GM12878 (cell line): ENCODE measurements at regions of chr1 and their contacts with region 1.

Region 1: DNA sequence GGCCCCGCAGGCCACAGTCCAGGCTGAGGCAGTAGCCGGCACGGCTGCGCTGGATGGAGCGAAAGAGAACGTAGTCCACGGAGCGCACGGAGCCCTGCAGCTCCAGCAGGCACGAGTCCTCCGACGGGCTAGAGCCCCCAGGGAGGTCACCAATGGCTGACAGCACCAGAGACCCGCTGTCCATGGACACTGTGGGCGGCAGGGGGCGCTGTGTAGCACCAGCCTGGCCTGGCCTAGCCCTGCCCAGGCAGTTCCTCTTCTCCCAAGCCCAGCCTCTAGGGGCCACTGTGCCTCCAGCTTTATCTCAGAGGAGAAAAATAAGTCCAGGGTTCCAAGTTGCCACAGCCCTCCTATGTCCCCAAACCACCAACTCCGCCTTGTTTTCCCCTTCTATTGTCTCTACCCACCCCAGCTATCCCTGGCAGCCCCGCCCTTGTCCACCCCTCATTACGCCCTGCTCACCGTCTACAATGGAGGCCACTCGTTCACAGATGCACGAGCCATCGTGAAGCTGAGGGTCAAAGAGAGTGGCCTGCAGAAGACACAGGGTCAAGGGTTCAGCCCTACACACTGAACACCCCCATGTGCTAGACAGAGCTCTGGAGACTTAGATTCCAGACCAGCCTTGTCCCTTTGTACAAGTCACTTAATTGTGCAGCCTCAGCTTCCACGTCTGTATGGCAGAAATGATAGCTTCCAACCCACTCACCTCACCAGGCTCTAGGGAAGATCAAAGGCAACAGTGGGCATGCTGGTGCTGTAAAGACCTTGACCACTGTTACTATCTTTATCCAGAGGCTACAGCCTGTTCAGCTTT is 4.4 kb downstream of the ENTREP3 start:
- DNase-seq: peak; percentile 57
- ATAC-seq: peak; percentile 97
- H3K4me3 ChIP-seq: peak overlapping the region; percentile 72
- H3K27ac ChIP-seq: peak overlapping the region; percentile 38
- H3K4me1 ChIP-seq: peaks cover 13% of the 10 kb centered on the region
- H3K27me3 ChIP-seq: no peaks in the 10 kb centered on the region
- CTCF ChIP-seq: peak; percentile 100; a peak in 5 of 6 replicates
- EP300 ChIP-seq: no peak
- POLR2A ChIP-seq: peak; percentile 65
- RAD21 ChIP-seq: peak; percentile 89

Region 2: GRCh38 chr1:154453574-154454352 is 797.1 kb before region 1 on chr1:
- CTCF ChIA-PET with region 1: no interaction called
- POLR2A ChIA-PET with region 1: no interaction called
- RAD21 ChIA-PET with region 1: no interaction called
- SMC1A ChIA-PET with region 1: no interaction called
- in situ Hi-C with region 1: no loop called
- intact Hi-C with region 1: no loop called
- DNase-seq: no peak
- ATAC-seq: no peak; the same call in 1 of the 3 replicates
- H3K4me3 ChIP-seq: no peak overlapping the region
- H3K27ac ChIP-seq: no peak overlapping the region
- H3K4me1 ChIP-seq: peaks cover 11% of the 10 kb centered on the region; the same call in 1 of the 2 replicates
- H3K27me3 ChIP-seq: no peaks in the 10 kb centered on the region
- CTCF ChIP-seq: no peak
- EP300 ChIP-seq: no peak
- POLR2A ChIP-seq: no peak
- RAD21 ChIP-seq: no peak

Region 3: DNA sequence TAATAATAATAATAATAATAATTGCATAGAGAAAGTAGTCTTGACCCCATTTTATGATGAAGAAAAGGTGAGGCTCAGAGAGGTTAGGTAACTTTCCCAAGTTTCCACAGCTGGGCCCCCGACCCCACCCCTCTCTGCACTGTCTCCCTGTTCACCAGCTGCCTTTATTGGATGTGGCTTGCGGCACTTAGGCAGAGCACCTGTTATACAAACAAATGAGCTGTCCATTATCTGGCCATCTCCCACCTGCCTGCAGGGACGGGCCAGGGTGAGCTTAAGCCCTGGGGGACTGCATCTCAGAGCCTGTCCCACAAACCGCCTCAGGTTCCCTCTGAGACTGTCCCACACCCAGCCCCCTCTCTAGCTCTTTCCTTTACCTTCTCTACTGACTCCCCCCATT is 133.2 kb before region 1 on chr1:
- CTCF ChIA-PET with region 1: no interaction called
- POLR2A ChIA-PET with region 1: no interaction called
- RAD21 ChIA-PET with region 1: no interaction called
- SMC1A ChIA-PET with region 1: no interaction called
- in situ Hi-C with region 1: no loop called
- intact Hi-C with region 1: no loop called
- DNase-seq: no peak
- ATAC-seq: no peak
- H3K4me3 ChIP-seq: no peak overlapping the region
- H3K27ac ChIP-seq: no peak overlapping the region
- H3K4me1 ChIP-seq: peaks cover 5% of the 10 kb centered on the region; the same call in 1 of the 2 replicates
- H3K27me3 ChIP-seq: peaks cover 0 to 2% of the 10 kb centered on the region in 2 experiments; a peak in 1 of 4 replicates
- CTCF ChIP-seq: no peak
- EP300 ChIP-seq: no peak
- POLR2A ChIP-seq: no peak
- RAD21 ChIP-seq: no peak

Region 4: GRCh38 chr1:155172732-155173477 is 77.9 kb before region 1 on chr1 and contains the start of gene KRTCAP2:
- CTCF ChIA-PET with region 1: interaction called, 13 read pairs
- POLR2A ChIA-PET with region 1: interaction called, 5 read pairs
- RAD21 ChIA-PET with region 1: interaction called, 3 read pairs
- SMC1A ChIA-PET with region 1: no interaction called
- in situ Hi-C with region 1: no loop called
- intact Hi-C with region 1: no loop called
- DNase-seq: peak; percentile 89
- ATAC-seq: peak; percentile 89
- H3K4me3 ChIP-seq: peak within 1 kb of the TSS; percentile 73
- H3K27ac ChIP-seq: peak within 1 kb of the TSS; percentile 93
- H3K4me1 ChIP-seq: peaks cover 26% of the 10 kb centered on the region
- H3K27me3 ChIP-seq: no peaks in the 10 kb centered on the region
- CTCF ChIP-seq: peak; percentile 96 to 99 (median 99); a peak in 5 of 6 replicates
- EP300 ChIP-seq: no peak
- POLR2A ChIP-seq: peak; percentile 86
- RAD21 ChIP-seq: peak; percentile 26; the same call in 1 of the 2 replicates
- polyA plus RNA-seq, gene KRTCAP2: 144 to 181 TPM

Region 5: GRCh38 chr1:155227261-155228095 is 23.4 kb before region 1 on chr1:
- CTCF ChIA-PET with region 1: interaction called, 24 read pairs
- POLR2A ChIA-PET with region 1: interaction called, 6 read pairs
- RAD21 ChIA-PET with region 1: interaction called, 3 read pairs
- SMC1A ChIA-PET with region 1: interaction called, 5 read pairs
- in situ Hi-C with region 1: no loop called
- intact Hi-C with region 1: no loop called
- DNase-seq: peak; percentile 96
- ATAC-seq: peak; percentile 95
- H3K4me3 ChIP-seq: peak overlapping the region; percentile 67
- H3K27ac ChIP-seq: peak overlapping the region; percentile 96
- H3K4me1 ChIP-seq: peaks cover 36% of the 10 kb centered on the region
- H3K27me3 ChIP-seq: no peaks in the 10 kb centered on the region
- CTCF ChIP-seq: no peak
- EP300 ChIP-seq: 0 out of 4 replicates have a peak, but pooled peaks of 1 of the 2 experiments have one; percentile 16
- POLR2A ChIP-seq: peak; percentile 79
- RAD21 ChIP-seq: no peak

Region 6: DNA sequence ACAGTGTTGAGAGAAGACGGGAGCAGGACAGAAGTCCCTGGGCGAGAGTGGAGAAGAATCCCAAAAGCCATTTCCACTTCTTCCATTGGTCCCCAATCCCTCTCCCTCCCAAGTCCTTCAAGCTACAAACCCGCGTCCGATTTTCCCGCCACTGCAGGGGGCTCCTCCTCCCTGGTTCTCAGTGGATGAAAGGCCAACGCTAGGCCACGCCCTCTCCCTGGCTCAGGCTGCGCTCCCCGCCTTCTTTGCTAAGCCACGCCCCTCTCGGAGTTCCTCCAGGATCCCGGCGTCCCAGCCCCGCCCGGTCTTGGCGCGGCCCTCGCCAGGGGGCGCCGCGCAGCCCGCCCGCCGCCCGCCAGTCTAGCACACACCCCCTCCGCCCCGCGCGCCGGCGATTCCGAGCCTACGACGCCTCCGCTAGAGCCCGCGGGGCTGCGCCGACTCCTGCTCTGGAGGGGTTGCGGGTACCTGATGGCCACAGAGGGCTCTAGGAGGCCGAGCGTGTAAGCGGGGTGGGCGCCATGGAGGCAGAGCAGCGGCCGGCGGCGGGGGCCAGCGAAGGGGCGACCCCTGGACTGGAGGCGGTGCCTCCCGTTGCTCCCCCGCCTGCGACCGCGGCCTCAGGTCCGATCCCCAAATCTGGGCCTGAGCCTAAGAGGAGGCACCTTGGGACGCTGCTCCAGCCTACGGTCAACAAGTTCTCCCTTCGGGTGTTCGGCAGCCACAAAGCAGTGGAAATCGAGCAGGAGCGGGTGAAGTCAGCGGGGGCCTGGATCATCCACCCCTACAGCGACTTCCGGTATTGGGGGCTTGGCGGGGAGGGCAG is 26.4 kb after region 1 on chr1 and contains the start of gene HCN3:
- CTCF ChIA-PET with region 1: interaction called, 80 read pairs
- POLR2A ChIA-PET with region 1: interaction called, 12 read pairs
- RAD21 ChIA-PET with region 1: interaction called, 9 read pairs
- SMC1A ChIA-PET with region 1: interaction called, 17 read pairs
- in situ Hi-C with region 1: no loop called
- intact Hi-C with region 1: no loop called
- DNase-seq: peak; percentile 79
- ATAC-seq: peak; percentile 78
- H3K4me3 ChIP-seq: peak within 1 kb of the TSS; percentile 82
- H3K27ac ChIP-seq: no peak within 1 kb of the TSS
- H3K4me1 ChIP-seq: peaks cover 13% of the 10 kb centered on the region
- H3K27me3 ChIP-seq: no peaks in the 10 kb centered on the region
- CTCF ChIP-seq: peak; percentile 46 to 72 (median 54); a peak in 5 of 6 replicates
- EP300 ChIP-seq: no peak
- POLR2A ChIP-seq: no peak
- RAD21 ChIP-seq: peak; percentile 24; the same call in 1 of the 2 replicates
- polyA plus RNA-seq, gene HCN3: 0.08 to 0.31 TPM

Region 7: DNA sequence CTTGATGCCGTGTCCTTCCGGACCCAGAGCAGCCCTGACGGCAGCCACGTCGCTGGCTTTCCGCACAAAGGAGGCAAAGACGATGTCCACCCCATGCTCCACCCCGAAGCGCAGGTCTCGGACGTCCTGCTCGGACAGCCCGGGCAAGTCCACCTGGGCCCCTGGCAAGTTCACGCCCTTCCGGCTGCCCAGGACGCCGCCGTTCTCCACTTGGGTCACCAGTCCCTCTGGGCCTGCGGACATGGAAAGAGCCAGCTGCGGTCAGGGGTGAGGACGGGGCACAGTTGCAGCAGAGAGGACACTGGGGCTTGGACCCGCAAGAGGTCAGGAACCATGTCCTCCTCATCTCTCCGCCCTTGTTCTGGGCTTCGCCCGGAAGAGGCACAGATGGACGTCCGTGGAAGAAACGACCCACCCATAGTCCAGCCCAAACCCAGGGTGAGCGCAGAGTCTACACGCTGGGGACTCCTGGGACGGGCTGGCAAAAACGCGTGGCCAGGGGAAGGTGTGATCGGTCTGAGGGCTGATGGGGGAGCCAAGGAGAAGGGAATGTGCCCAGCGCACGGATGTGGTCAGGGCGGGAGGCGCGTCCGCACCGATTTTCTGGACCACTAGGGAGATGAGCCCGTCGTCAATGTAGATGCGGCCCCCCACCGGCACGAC is 43.8 kb after region 1 on chr1:
- CTCF ChIA-PET with region 1: no interaction called
- POLR2A ChIA-PET with region 1: no interaction called
- RAD21 ChIA-PET with region 1: no interaction called
- SMC1A ChIA-PET with region 1: no interaction called
- in situ Hi-C with region 1: no loop called
- intact Hi-C with region 1: no loop called
- DNase-seq: no peak
- ATAC-seq: no peak
- H3K4me3 ChIP-seq: no peak overlapping the region
- H3K27ac ChIP-seq: no peak overlapping the region
- H3K4me1 ChIP-seq: peaks cover 3% of the 10 kb centered on the region; the same call in 1 of the 2 replicates
- H3K27me3 ChIP-seq: no peaks in the 10 kb centered on the region; a peak in 1 of 4 replicates
- CTCF ChIP-seq: no peak
- EP300 ChIP-seq: no peak
- POLR2A ChIP-seq: no peak
- RAD21 ChIP-seq: no peak

Region 8: DNA sequence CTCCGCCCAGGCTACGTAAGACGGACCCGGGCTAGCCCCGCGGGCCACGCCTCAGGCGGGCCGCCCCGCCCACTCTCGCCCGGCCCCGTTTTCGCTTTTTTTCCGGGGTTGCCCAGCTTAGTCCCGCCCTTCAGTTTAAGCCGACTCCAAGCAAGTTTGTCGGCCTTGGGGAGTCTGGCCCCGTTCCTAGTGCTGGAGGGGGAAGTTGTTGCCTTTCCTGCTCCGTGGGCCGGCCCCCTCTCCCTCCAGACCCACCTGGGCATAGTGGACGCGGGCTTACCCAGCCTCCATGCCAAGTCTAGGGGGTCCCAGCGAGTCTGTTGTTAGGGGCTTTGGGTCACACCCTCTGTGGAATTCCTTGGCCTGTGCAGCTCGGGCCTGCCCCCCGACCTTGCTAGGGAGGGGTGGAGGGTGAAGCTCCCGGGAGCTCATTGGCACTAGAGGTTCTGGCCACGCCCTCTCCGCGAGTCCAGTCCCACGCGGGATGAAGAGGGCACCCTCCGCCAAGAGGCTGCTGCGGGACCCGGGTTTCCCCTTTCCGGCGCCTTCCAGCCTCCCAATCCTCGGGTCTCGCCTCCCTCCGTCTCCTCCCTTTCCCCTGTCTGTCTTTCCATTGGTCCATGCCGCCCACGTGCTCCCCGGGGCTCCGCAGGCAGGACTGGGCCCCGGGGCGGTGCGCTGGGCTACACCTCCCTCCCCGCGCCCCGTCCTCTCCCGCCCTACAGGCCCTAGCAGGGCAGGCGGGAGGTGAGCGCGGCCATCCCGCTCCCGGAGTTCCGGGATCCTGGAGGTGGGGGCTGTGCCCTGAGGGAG is 73.2 kb after region 1 on chr1:
- CTCF ChIA-PET with region 1: interaction called, 225 read pairs
- POLR2A ChIA-PET with region 1: interaction called, 23 read pairs
- RAD21 ChIA-PET with region 1: interaction called, 81 read pairs
- SMC1A ChIA-PET with region 1: interaction called, 57 read pairs
- in situ Hi-C with region 1: no loop called
- intact Hi-C with region 1: loop called (anchors 1 kb)
- DNase-seq: peak; percentile 84
- ATAC-seq: peak; percentile 87
- H3K4me3 ChIP-seq: peak overlapping the region; percentile 88
- H3K27ac ChIP-seq: peak overlapping the region; percentile 66
- H3K4me1 ChIP-seq: peaks cover 7% of the 10 kb centered on the region
- H3K27me3 ChIP-seq: no peaks in the 10 kb centered on the region
- CTCF ChIP-seq: 0 out of 6 replicates have a peak, but pooled peaks of 1 of the 3 experiments have one; percentile 3
- EP300 ChIP-seq: 0 out of 4 replicates have a peak, but pooled peaks of 1 of the 2 experiments have one; percentile 15
- POLR2A ChIP-seq: peak; percentile 74
- RAD21 ChIP-seq: no peak

Region 9: DNA sequence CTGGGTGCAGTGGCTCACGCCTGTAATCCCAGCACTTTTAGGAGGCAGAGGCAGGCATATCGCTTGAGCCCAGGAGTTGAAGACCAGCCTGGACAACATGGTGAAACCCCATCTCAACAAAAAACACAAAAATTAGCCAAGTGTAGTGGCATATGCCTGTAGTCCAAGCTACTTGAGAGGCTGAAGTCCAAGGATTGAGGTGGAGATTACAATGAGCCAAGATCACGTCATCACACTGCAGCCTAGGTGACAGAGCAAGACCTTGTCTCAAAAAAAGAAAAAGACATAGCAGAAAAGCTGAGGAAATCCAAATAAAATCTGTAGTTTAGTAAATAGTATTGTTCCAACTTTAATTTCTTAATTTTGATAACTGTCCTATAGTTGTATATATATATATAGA is 323.2 kb after region 1 on chr1:
- CTCF ChIA-PET with region 1: interaction called, 10 read pairs
- POLR2A ChIA-PET with region 1: no interaction called
- RAD21 ChIA-PET with region 1: no interaction called
- SMC1A ChIA-PET with region 1: interaction called, 3 read pairs
- in situ Hi-C with region 1: no loop called
- intact Hi-C with region 1: no loop called
- DNase-seq: no peak
- ATAC-seq: no peak
- H3K4me3 ChIP-seq: no peak overlapping the region
- H3K27ac ChIP-seq: no peak overlapping the region
- H3K4me1 ChIP-seq: peaks cover 4% of the 10 kb centered on the region
- H3K27me3 ChIP-seq: no peaks in the 10 kb centered on the region
- CTCF ChIP-seq: no peak
- EP300 ChIP-seq: no peak
- POLR2A ChIP-seq: no peak
- RAD21 ChIP-seq: no peak